SK-N-SH (cell line): ENCODE measurements at regions of chr7 and their contacts with region 1.

Region 1: GRCh38 chr7:17769918-17770317 is 170.4 kb downstream of the SNX13 start:
- DNase-seq: peak; percentile 48
- H3K4me3 ChIP-seq: no peak overlapping the region; a peak in 1 of 4 replicates
- H3K27ac ChIP-seq: no peak overlapping the region
- H3K4me1 ChIP-seq: peaks cover 0 to 4% of the 10 kb centered on the region in 2 experiments; a peak in 2 of 4 replicates
- H3K27me3 ChIP-seq: no peaks in the 10 kb centered on the region; the same call in 1 of the 2 replicates
- CTCF ChIP-seq: peak; percentile 98
- EP300 ChIP-seq: no peak
- RAD21 ChIP-seq: peak; percentile 99

Region 2: GRCh38 chr7:17680943-17681351 is 89.0 kb before region 1 on chr7:
- CTCF ChIA-PET with region 1: interaction called, 11 read pairs
- POLR2A ChIA-PET with region 1: no interaction called
- DNase-seq: no peak
- H3K4me3 ChIP-seq: no peak overlapping the region
- H3K27ac ChIP-seq: peak overlapping the region in 1 of 2 experiments; percentile 65; a peak in 2 of 4 replicates
- H3K4me1 ChIP-seq: peaks cover 0 to 22% of the 10 kb centered on the region in 2 experiments; a peak in 3 of 4 replicates
- H3K27me3 ChIP-seq: no peaks in the 10 kb centered on the region
- CTCF ChIP-seq: peak; percentile 58
- EP300 ChIP-seq: no peak
- RAD21 ChIP-seq: peak; percentile 51

Region 3: GRCh38 chr7:17746020-17746530 is 23.8 kb before region 1 on chr7:
- CTCF ChIA-PET with region 1: interaction called, 18 read pairs
- POLR2A ChIA-PET with region 1: no interaction called
- DNase-seq: no peak
- H3K4me3 ChIP-seq: no peak overlapping the region
- H3K27ac ChIP-seq: no peak overlapping the region
- H3K4me1 ChIP-seq: no peaks in the 10 kb centered on the region; a peak in 1 of 4 replicates
- H3K27me3 ChIP-seq: no peaks in the 10 kb centered on the region; the same call in 1 of the 2 replicates
- CTCF ChIP-seq: no peak
- EP300 ChIP-seq: no peak
- RAD21 ChIP-seq: no peak

Region 4: GRCh38 chr7:17792075-17792936 is 22.4 kb after region 1 on chr7:
- CTCF ChIA-PET with region 1: interaction called, 26 read pairs
- POLR2A ChIA-PET with region 1: no interaction called
- DNase-seq: no peak
- H3K4me3 ChIP-seq: no peak overlapping the region
- H3K27ac ChIP-seq: no peak overlapping the region
- H3K4me1 ChIP-seq: no peaks in the 10 kb centered on the region
- H3K27me3 ChIP-seq: no peaks in the 10 kb centered on the region
- CTCF ChIP-seq: no peak
- EP300 ChIP-seq: no peak
- RAD21 ChIP-seq: no peak

Region 5: GRCh38 chr7:17976952-17977351 is 207.0 kb after region 1 on chr7:
- CTCF ChIA-PET with region 1: interaction called, 19 read pairs
- POLR2A ChIA-PET with region 1: no interaction called
- DNase-seq: no peak
- H3K4me3 ChIP-seq: no peak overlapping the region
- H3K27ac ChIP-seq: no peak overlapping the region
- H3K4me1 ChIP-seq: no peaks in the 10 kb centered on the region
- H3K27me3 ChIP-seq: peaks cover under 1% of the 10 kb centered on the region; the same call in 1 of the 2 replicates
- CTCF ChIP-seq: no peak
- EP300 ChIP-seq: no peak
- RAD21 ChIP-seq: no peak

Region 6: GRCh38 chr7:18059171-18059570 is 289.3 kb after region 1 on chr7:
- CTCF ChIA-PET with region 1: interaction called, 28 read pairs
- POLR2A ChIA-PET with region 1: no interaction called
- DNase-seq: no peak
- H3K4me3 ChIP-seq: no peak overlapping the region
- H3K27ac ChIP-seq: no peak overlapping the region
- H3K4me1 ChIP-seq: no peaks in the 10 kb centered on the region
- H3K27me3 ChIP-seq: peaks cover 24% of the 10 kb centered on the region; the same call in 1 of the 2 replicates
- CTCF ChIP-seq: no peak
- EP300 ChIP-seq: no peak
- RAD21 ChIP-seq: no peak

Region 7: GRCh38 chr7:18320971-18321567 is 551.2 kb after region 1 on chr7:
- CTCF ChIA-PET with region 1: interaction called, 84 read pairs
- POLR2A ChIA-PET with region 1: no interaction called
- DNase-seq: peak; percentile 31
- H3K4me3 ChIP-seq: no peak overlapping the region
- H3K27ac ChIP-seq: no peak overlapping the region
- H3K4me1 ChIP-seq: no peaks in the 10 kb centered on the region; a peak in 1 of 4 replicates
- H3K27me3 ChIP-seq: peaks cover 27% of the 10 kb centered on the region; the same call in 1 of the 2 replicates
- CTCF ChIP-seq: peak; percentile 79
- EP300 ChIP-seq: no peak
- RAD21 ChIP-seq: peak; percentile 80